PC-9 (cell line): ENCODE measurements at regions of chr6 and their contacts with region 1.

Region 1: DNA sequence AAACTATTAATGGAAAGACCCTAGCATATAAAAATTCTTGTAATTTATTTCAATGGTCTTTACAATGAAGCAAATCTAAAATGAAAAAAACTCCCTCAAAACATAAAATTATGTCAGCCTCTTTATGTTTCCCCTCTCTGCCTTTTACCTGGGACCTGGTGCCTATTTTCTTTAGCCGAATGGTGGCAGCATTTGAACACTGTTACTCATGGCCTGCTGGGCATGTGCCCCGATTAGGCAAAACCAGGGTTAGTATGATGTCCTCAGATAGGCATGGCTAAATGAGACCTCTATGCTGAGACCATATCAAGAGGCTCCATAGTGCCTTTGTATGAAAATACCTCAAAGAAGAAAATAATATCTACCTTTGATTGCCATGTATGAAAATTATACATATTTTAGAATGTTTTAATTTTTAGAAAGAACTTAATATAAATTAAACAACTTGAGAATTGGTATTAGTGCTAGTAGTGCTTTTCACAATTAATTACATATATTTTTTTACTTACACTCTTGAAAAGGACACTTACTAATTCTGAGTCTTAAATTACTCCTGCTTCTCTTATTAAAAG is 22.5 kb upstream of the C6orf58 start:
- DNase-seq: peak in 1 of 2 experiments; percentile 31
- H3K4me3 ChIP-seq: no peak overlapping the region
- H3K27ac ChIP-seq: no peak overlapping the region
- H3K4me1 ChIP-seq: peaks cover 9% of the 10 kb centered on the region
- H3K27me3 ChIP-seq: no peaks in the 10 kb centered on the region
- CTCF ChIP-seq: peak; percentile 69

Region 2: DNA sequence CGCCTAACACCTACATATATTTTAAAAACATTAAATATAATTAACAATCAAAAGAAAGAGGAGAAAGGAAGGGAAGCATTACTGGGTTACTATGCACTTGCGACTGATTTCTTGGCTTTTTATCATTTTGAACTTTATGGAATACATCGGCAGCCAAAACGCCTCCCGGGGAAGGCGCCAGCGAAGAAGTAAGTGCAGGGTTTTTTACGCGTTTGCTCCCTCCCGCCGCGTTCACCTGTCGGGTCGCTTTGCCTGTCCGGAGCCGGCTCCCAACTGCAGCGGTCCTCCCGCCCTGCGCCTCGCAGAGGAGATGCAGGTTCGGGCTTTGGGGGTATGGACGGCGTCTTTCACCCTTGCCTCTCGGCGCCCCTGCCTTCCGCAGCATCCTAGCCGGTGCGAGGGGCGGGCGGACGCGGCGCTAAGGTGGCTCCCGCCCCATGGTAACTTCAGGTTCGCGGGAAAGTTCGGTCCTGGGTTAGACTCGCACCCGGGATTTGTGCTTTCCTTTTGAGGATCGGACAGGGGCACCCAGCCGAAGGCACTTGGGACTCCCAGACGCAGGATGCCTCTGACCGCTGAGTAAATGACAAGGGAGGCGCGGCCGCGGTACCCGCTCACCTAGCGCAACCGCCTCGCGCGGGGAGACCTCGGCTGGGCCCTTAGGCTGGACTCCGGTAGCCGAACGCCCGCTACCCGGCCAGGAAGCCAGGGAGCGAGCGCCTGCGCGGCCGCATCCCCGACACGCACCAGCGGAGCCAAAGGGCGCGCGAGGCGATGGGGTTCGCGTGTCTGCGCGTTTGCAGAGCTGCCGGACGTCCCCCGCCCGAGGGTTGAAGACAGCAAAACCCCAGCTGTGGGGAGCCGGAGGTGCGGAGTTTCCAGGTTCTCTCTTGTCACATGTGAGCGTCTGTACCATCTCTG is 435.2 kb before region 1 on chr6:
- CTCF ChIA-PET with region 1: no interaction called
- POLR2A ChIA-PET with region 1: no interaction called
- intact Hi-C with region 1: no loop called
- DNase-seq: peak; percentile 24 to 30
- H3K4me3 ChIP-seq: peak overlapping the region; percentile 73
- H3K27ac ChIP-seq: no peak overlapping the region
- H3K4me1 ChIP-seq: no peaks in the 10 kb centered on the region
- H3K27me3 ChIP-seq: peaks cover 43% of the 10 kb centered on the region
- CTCF ChIP-seq: 0 out of 2 replicates have a peak, but pooled peaks have one; percentile 19

Region 3: DNA sequence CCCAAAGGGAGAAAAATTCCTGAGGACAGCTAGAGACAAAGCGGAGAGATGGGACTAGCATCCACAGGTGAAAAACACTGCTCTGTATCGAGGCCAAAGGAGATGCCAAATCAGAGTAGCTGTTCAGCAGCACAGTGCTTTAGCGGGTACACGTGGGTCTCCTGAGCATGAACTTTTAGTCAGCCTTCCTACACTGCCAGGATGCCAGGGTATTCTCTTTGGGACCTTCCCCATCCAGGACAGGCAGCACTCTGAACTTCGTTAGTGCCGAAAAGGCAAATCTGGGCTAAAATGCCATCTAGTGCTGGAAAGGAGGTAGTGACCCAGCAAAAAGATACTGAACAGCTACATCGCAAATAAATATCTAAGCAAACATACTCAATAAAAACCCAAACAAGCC is 87.4 kb after region 1 on chr6:
- CTCF ChIA-PET with region 1: no interaction called
- POLR2A ChIA-PET with region 1: no interaction called
- intact Hi-C with region 1: loop called (anchors 5 kb)
- DNase-seq: peak in 1 of 2 experiments; percentile 3
- H3K4me3 ChIP-seq: no peak overlapping the region
- H3K27ac ChIP-seq: no peak overlapping the region
- H3K4me1 ChIP-seq: no peaks in the 10 kb centered on the region
- H3K27me3 ChIP-seq: no peaks in the 10 kb centered on the region
- CTCF ChIP-seq: peak; percentile 85

Region 4: DNA sequence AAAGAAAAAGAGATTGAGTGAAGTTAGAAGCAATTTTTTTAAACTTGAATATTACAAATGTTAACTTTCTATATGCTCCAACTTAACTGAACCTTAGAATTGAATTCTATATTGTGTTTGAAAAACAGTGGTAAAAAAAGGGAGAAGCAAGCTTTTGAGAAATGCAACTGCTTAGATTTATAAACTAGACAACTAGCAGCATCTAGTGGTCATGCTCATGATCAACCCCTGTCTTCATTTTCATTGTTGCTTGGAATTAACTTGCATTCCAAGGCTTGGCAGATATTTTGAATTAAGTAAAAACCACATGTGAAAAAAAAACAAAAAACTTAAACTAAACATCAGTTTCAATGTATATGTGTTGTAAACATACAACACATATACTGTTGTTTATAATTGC is 135.6 kb after region 1 on chr6:
- CTCF ChIA-PET with region 1: no interaction called
- POLR2A ChIA-PET with region 1: no interaction called
- intact Hi-C with region 1: loop called (anchors 2 kb)
- DNase-seq: peak in 1 of 2 experiments; percentile 0
- H3K4me3 ChIP-seq: no peak overlapping the region
- H3K27ac ChIP-seq: no peak overlapping the region
- H3K4me1 ChIP-seq: no peaks in the 10 kb centered on the region
- H3K27me3 ChIP-seq: no peaks in the 10 kb centered on the region
- CTCF ChIP-seq: peak; percentile 82